ENCODE measurements at regions of chr7 and their contacts with region 1.

Region 1: DNA sequence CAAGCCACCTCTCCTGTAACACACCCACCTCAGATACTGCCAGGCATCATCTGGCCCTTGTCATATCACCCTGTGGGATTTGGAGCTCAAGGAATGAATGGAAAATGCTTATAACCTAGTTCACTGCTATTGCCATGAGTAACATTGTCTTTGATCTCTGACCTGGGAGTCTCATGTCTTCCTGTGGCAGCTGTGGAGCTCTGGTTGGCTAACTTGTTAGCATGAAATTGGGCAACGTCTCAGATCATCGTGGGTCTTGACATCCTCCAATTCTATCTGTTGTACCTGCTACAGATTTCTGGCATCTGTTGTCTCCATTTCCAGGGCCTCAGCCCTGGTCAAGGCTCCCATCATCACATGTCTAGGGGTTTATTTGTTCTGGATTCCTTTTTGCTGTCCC is 2.2 kb upstream of the TMEM270 start:
- DNase-seq: no peak
- ATAC-seq: no peak
- H3K4me3 ChIP-seq: no peak overlapping the region
- H3K4me3 Mint-ChIP-seq: no peak overlapping the region
- H3K27ac ChIP-seq: no peak overlapping the region
- H3K27ac Mint-ChIP-seq: no peak overlapping the region
- H3K4me1 ChIP-seq: peaks cover 0 to 9% of the 10 kb centered on the region in 2 experiments
- H3K4me1 Mint-ChIP-seq: peaks cover 0 to 5% (median 5%) of the 10 kb centered on the region in 3 donors
- H3K27me3 ChIP-seq: peaks cover 4 to 37% of the 10 kb centered on the region in 2 experiments
- H3K27me3 Mint-ChIP-seq: peaks cover 8 to 14% of the 10 kb centered on the region in 2 donors

Region 2: DNA sequence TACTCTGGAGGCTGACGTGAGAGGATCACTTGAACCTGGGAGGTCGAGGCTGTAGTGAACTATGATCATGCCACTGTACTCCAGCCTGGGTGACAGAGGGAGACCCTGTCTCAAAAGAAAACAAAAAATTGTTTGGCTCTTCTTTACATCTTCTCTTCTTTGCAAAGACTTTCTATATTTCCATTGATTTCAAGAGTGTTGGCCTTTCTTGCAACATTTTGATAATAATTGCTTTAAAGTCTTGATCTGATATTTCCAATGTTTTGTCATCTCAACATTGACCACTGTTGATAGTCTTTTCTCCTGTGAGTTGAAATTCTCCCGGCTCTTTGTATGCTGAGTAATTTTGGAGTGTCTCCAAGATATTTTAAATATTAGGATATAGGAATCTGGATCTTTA is 45.8 kb before region 1 on chr7:
- CTCF ChIA-PET with region 1: interaction called, 4 read pairs
- POLR2A ChIA-PET with region 1: interaction called in 1 of 2 experiments, 10 read pairs
- DNase-seq: no peak
- ATAC-seq: no peak
- H3K4me3 ChIP-seq: no peak overlapping the region
- H3K4me3 Mint-ChIP-seq: no peak overlapping the region
- H3K27ac ChIP-seq: no peak overlapping the region
- H3K27ac Mint-ChIP-seq: no peak overlapping the region
- H3K4me1 ChIP-seq: no peaks in the 10 kb centered on the region
- H3K4me1 Mint-ChIP-seq: no peaks in the 10 kb centered on the region
- H3K27me3 ChIP-seq: peaks cover 0 to 40% of the 10 kb centered on the region in 2 experiments
- H3K27me3 Mint-ChIP-seq: peaks cover 3 to 18% of the 10 kb centered on the region in 2 donors

Region 3: DNA sequence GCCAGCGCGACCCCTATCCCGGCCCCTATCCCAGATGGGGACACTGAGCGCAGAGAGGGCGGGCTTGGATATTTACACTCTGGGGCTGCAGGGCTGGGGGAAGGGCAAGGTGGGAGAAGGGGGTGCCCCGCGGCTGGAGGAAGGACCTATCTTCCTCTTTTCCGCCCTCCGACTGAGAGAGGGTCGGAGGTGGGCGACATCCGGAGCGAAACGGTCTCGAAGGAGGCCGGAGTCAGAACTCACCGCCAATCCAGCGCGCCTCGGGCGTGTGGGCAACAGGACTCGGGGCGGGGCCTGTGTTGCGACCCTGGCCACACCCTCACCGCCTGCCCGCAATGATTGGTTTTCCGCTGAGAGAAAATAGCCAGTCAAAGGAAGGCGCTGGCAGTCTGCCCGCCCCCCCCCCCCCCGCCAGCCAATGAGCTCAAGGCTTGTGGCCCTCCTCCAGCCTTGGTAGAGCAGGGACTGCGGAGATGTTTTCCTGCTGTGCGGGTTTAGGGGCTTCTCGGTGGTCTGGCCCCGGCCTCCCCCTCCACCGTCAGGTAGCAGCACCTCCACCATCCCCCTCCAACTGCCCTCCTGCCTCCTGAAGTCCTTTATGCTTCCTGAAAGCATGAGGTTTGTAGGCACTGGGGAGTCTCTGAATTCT is 16.4 kb before region 1 on chr7 and contains the start of gene METTL27:
- CTCF ChIA-PET with region 1: interaction called, 8 to 18 read pairs
- POLR2A ChIA-PET with region 1: no interaction called
- DNase-seq: peak; percentile 74 to 91 (median 87)
- ATAC-seq: peak; percentile 99 to 100 (median 100)
- H3K4me3 ChIP-seq: peak within 1 kb of the TSS; percentile 57 to 60
- H3K4me3 Mint-ChIP-seq: peak within 1 kb of the TSS; percentile 81 to 86 (median 84)
- H3K27ac ChIP-seq: no peak within 1 kb of the TSS
- H3K27ac Mint-ChIP-seq: peak within 1 kb of the TSS; percentile 63 to 82
- H3K4me1 ChIP-seq: peaks cover 0 to 21% of the 10 kb centered on the region in 2 experiments
- H3K4me1 Mint-ChIP-seq: peaks cover 7 to 14% (median 11%) of the 10 kb centered on the region in 3 donors
- H3K27me3 ChIP-seq: peaks cover 0 to 10% of the 10 kb centered on the region in 2 experiments
- H3K27me3 Mint-ChIP-seq: no peaks in the 10 kb centered on the region
- total RNA-seq, gene METTL27: 0.45 to 7.2 (median 1.8) TPM